ENCODE measurements at regions of chr2 and their contacts with region 1.

Region 1: DNA sequence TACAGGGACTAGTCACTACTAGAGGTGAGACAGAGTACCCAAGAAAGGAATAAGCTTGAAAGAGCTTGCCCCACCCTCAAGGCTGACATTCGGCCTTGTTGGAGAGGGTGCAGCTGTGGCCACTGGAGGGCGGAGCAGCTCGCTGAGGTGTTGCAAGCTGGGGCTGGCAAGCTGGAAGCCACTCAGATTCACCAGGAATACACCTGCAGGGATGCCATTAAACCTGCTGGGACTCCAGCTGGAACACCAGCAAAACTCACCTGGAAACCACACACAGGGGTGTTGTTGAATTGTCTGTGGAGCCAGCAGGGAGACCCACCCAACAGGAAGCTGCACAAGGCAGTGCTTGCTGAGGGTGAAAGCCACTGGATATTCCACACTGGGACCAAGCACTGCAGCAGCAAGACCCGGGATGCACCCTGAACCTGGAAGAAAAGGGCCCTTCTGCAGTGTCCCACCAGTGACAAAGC is 26.1 kb downstream of the KCTD18 start:
- DNase-seq: no peak
- ATAC-seq: peak in 3 of 4 donors; percentile 27 to 28 (median 28)
- H3K4me3 ChIP-seq: no peak overlapping the region
- H3K27ac ChIP-seq: no peak overlapping the region
- H3K4me1 ChIP-seq: peaks cover 0 to 5% (median 0%) of the 10 kb centered on the region in 12 donors
- H3K27me3 ChIP-seq: no peaks in the 10 kb centered on the region
- CTCF ChIP-seq: peak in 6 of 12 donors; percentile 7 to 38 (median 18)
- POLR2A ChIP-seq: no peak

Region 2: DNA sequence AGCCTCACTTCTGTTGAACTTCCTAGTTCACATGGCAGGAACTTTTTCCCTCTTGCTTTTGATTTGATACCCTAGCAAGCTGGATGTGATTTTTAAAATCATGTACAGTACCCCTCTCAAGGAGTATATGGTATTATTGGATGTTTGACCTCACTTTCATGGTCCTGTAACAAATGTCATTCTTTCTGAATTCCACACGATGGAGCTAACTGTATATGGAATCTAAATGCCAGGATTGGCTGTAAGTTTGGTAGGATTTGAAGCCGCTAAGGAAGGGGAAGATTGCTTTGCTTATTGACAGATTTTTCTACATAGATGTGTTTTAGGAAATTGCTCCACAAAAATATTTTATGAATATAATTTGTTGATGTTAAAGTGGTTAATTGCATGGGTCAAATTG is 510.1 kb before region 1 on chr2:
- intact Hi-C with region 1: loop called in 3 of 10 experiments (anchors 2 to 5 kb)
- DNase-seq: no peak
- ATAC-seq: peak in 3 of 4 donors; percentile 39 to 71 (median 48)
- H3K4me3 ChIP-seq: no peak overlapping the region
- H3K27ac ChIP-seq: no peak overlapping the region
- H3K4me1 ChIP-seq: no peaks in the 10 kb centered on the region
- H3K27me3 ChIP-seq: no peaks in the 10 kb centered on the region
- CTCF ChIP-seq: peak; percentile 22 to 60 (median 46)
- POLR2A ChIP-seq: no peak

Region 3: GRCh38 chr2:199979832-199980628 is 503.7 kb before region 1 on chr2:
- intact Hi-C with region 1: loop called in 9 of 10 experiments (anchors 2 to 5 kb)
- DNase-seq: peak; percentile 76 to 88 (median 79)
- ATAC-seq: peak in 3 of 4 donors; percentile 75 to 82 (median 79)
- H3K4me3 ChIP-seq: peak overlapping the region in 5 of 12 donors; percentile 9 to 36 (median 23)
- H3K27ac ChIP-seq: no peak overlapping the region
- H3K4me1 ChIP-seq: peaks cover 0 to 9% (median 1%) of the 10 kb centered on the region in 12 donors
- H3K27me3 ChIP-seq: no peaks in the 10 kb centered on the region
- CTCF ChIP-seq: peak; percentile 84 to 96 (median 88)
- POLR2A ChIP-seq: no peak

Region 4: GRCh38 chr2:200670313-200670712 is 186.5 kb after region 1 on chr2:
- intact Hi-C with region 1: no loop called
- DNase-seq: no peak
- ATAC-seq: no peak
- H3K4me3 ChIP-seq: no peak overlapping the region
- H3K27ac ChIP-seq: no peak overlapping the region
- H3K4me1 ChIP-seq: no peaks in the 10 kb centered on the region
- H3K27me3 ChIP-seq: no peaks in the 10 kb centered on the region
- CTCF ChIP-seq: no peak
- POLR2A ChIP-seq: no peak

Region 5: DNA sequence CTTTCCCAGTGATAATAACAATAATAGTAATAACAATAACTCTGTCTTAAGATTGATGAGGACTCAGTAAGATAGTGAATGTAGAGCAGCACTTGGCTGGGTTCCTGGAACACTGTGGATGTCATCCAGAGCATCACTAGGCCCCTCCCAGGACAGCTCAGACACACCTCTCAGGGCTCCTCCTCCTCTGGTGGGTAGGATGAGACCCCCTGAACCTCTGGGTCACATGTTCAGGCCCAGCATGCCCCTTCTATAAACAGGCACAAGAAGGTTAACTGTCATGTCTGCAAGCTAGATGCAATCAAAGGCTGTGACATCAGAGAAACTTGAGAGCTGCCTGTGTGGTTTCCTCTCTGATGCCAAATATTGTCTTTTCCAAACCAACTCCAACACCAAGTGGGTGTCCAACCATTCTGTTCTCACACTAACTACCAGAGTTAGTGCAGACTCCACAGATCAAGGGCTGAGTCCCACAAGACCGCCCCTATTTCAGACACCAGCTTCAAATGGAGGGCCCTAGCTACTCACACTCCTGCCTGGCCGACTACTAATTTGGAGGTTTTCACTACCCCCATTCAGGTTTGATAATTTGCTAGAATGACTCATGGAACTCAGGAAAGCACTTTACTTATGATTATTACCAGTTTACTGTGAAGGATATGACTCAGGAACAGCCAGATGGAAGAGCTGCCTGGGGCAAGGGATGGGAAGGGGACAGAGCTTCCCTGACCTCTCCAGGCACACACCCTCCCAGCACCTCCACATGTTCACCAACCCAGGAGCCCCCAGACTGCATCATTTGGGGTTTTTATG is 281.6 kb after region 1 on chr2:
- intact Hi-C with region 1: no loop called
- DNase-seq: peak in 1 of 5 donors; percentile 37
- ATAC-seq: peak in 3 of 4 donors; percentile 19 to 56 (median 37)
- H3K4me3 ChIP-seq: no peak overlapping the region
- H3K27ac ChIP-seq: peak overlapping the region in 5 of 12 donors; percentile 2 to 66 (median 33)
- H3K4me1 ChIP-seq: peaks cover 0 to 20% (median 9%) of the 10 kb centered on the region in 12 donors
- H3K27me3 ChIP-seq: no peaks in the 10 kb centered on the region
- CTCF ChIP-seq: no peak
- POLR2A ChIP-seq: no peak